WTC11 (cell line): ENCODE measurements at regions of chr14 and their contacts with region 1.

Region 1: DNA sequence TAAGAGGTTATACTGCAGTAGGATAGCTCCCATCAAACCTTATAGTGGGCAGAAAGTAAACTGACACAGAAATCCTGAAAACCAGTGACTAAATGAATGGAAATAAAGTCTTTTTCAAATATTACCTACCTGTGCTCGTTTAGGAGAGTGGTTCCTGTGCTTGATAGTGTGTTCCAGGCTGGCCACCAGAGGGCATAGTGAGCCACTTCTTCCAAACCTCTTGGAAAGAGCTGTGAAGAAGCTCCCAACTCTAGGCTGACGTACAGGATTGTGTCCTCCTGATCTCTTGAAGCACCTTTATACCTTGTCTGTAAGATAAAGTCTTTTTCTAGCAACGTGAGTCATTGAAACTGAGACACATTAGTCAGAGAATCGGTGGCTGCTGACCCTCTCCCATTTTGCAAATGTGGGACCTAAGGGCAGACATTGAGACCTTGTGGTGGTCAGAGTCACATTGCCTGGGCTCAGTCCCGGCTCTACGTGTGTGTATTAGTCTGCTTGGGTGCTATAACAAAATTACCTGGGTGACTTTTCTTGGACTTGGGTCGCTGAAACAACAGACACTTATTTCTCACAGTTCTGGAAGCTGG is 17.6 kb downstream of the TDP1 start:
- DNase-seq: peak; percentile 76
- ATAC-seq: peak; percentile 94
- H3K4me3 Mint-ChIP-seq: no peak overlapping the region
- H3K27ac Mint-ChIP-seq: no peak overlapping the region
- H3K4me1 Mint-ChIP-seq: no peaks in the 10 kb centered on the region
- H3K27me3 Mint-ChIP-seq: no peaks in the 10 kb centered on the region
- CTCF ChIP-seq: peak; percentile 74; the same call in 1 of the 2 replicates

Region 2: GRCh38 chr14:89892953-89893352 is 80.4 kb before region 1 on chr14:
- CTCF ChIA-PET with region 1: no interaction called
- POLR2A ChIA-PET with region 1: no interaction called
- DNase-seq: no peak
- ATAC-seq: no peak
- H3K4me3 Mint-ChIP-seq: no peak overlapping the region
- H3K27ac Mint-ChIP-seq: no peak overlapping the region
- H3K4me1 Mint-ChIP-seq: no peaks in the 10 kb centered on the region
- H3K27me3 Mint-ChIP-seq: no peaks in the 10 kb centered on the region
- CTCF ChIP-seq: no peak

Region 3: DNA sequence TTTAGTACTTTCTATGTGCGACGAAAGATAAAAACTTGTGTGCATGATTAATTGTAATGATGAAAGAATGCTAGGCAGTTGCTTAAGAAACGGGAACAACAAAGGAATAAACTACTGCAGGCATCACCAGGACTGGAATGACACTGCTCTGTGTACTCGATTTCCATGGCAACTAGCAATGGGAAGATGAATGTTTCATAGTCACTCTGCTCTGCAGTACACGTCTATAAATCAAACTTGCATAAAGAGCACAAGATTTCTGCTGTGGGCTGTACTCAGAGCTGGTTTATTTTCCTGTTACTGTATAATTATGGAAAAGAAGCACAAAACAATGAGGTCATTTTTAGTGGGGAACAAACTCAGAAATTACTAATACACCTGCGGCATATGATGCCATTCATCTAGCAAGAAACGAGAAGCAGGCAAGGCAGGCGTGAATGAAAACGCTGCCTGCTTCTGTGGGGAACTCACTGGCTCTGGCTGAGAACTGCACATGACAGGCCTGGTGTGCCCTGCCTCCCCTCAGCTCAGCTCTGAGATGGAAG is 60.6 kb before region 1 on chr14:
- CTCF ChIA-PET with region 1: no interaction called
- POLR2A ChIA-PET with region 1: no interaction called
- DNase-seq: no peak
- ATAC-seq: no peak
- H3K4me3 Mint-ChIP-seq: no peak overlapping the region
- H3K27ac Mint-ChIP-seq: no peak overlapping the region
- H3K4me1 Mint-ChIP-seq: peaks cover 51% of the 10 kb centered on the region
- H3K27me3 Mint-ChIP-seq: no peaks in the 10 kb centered on the region; the same call in 1 of the 2 replicates
- CTCF ChIP-seq: no peak

Region 4: DNA sequence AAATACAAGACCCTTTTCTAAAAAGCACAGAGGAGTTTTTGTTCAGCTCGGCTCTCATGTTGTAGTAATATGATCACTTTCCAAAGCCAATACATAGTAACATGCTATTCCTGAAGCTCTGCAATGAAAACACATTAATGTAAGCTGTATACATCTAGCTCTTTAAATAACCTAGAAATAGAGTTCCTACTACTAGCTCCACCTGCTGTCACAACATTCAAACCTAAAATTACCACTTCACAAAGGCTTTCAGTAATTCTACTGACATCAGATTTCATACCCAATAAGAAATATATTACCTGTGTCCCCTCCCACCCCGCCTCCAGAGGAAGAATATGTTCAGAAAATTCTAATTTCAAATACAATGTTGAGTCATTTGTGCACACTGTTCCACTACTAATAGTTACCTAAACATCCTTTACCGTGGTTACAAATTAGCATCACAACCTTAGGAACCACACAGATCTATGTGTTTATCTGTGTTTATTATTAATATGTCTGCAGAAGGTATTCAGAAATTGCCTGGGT is 36.6 kb before region 1 on chr14:
- CTCF ChIA-PET with region 1: interaction called, 20 read pairs
- POLR2A ChIA-PET with region 1: no interaction called
- DNase-seq: no peak
- ATAC-seq: no peak
- H3K4me3 Mint-ChIP-seq: no peak overlapping the region
- H3K27ac Mint-ChIP-seq: no peak overlapping the region
- H3K4me1 Mint-ChIP-seq: peaks cover 16% of the 10 kb centered on the region
- H3K27me3 Mint-ChIP-seq: no peaks in the 10 kb centered on the region
- CTCF ChIP-seq: no peak

Region 5: GRCh38 chr14:89959853-89960445 is 13.4 kb before region 1 on chr14:
- CTCF ChIA-PET with region 1: interaction called, 18 read pairs
- POLR2A ChIA-PET with region 1: interaction called, 4 read pairs
- DNase-seq: no peak
- ATAC-seq: no peak
- H3K4me3 Mint-ChIP-seq: no peak overlapping the region
- H3K27ac Mint-ChIP-seq: no peak overlapping the region
- H3K4me1 Mint-ChIP-seq: peaks cover 47% of the 10 kb centered on the region
- H3K27me3 Mint-ChIP-seq: no peaks in the 10 kb centered on the region
- CTCF ChIP-seq: no peak

Region 6: GRCh38 chr14:90060312-90060964 is 87.1 kb after region 1 on chr14:
- CTCF ChIA-PET with region 1: interaction called, 27 read pairs
- POLR2A ChIA-PET with region 1: interaction called, 3 read pairs
- DNase-seq: peak; percentile 81
- ATAC-seq: peak; percentile 82
- H3K4me3 Mint-ChIP-seq: peak overlapping the region; percentile 73
- H3K27ac Mint-ChIP-seq: no peak overlapping the region
- H3K4me1 Mint-ChIP-seq: peaks cover 28% of the 10 kb centered on the region
- H3K27me3 Mint-ChIP-seq: peaks cover 82% of the 10 kb centered on the region
- CTCF ChIP-seq: peak; percentile 47; the same call in 1 of the 2 replicates

Region 7: GRCh38 chr14:90087433-90087832 is 114.1 kb after region 1 on chr14:
- CTCF ChIA-PET with region 1: no interaction called
- POLR2A ChIA-PET with region 1: no interaction called
- DNase-seq: no peak
- ATAC-seq: no peak
- H3K4me3 Mint-ChIP-seq: no peak overlapping the region
- H3K27ac Mint-ChIP-seq: no peak overlapping the region
- H3K4me1 Mint-ChIP-seq: peaks cover 12% of the 10 kb centered on the region
- H3K27me3 Mint-ChIP-seq: peaks cover 8% of the 10 kb centered on the region
- CTCF ChIP-seq: no peak

Region 8: DNA sequence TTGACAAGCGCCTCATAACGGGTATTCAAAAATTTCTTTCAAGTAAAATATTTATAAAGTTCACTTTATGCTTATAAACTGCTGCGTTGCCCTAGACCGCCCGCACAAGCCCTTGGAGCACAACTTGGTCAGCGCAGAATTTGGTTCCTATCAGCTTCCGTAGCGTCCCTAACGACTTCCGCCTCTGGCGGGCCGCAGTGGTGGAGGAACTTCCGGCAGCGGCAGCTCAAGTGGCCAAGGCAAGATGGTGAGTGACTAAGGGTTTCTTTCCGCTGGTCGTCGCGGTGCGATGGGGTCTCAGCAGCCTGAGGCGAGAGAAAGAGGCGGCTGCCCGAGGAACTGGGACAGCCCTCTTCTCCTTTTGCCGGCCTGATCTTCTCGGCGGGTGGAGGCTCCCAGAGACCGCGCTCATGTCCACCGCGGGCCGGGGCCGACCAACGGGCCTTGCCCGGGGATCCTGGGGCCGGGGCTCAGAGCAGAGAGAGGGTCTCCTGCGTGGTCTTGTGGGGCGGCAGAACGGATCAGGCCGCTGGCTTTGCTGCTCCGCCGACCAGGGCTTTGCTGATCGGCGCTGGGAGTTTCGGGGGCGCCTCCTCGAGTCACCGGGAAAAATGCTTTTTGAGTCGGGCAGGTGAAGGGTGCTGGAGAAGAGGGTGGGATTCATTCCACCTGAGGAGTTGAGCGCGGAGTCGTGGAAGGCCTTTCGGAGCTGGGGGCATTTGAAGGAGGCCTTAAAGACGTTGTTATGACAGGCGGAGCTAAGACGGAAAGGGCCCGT is 283.2 kb after region 1 on chr14 and contains the start of gene PSMC1:
- CTCF ChIA-PET with region 1: interaction called, 10 read pairs
- POLR2A ChIA-PET with region 1: no interaction called
- DNase-seq: peak; percentile 79
- ATAC-seq: peak; percentile 94
- H3K4me3 Mint-ChIP-seq: peak within 1 kb of the TSS; percentile 98
- H3K27ac Mint-ChIP-seq: peak within 1 kb of the TSS; percentile 90
- H3K4me1 Mint-ChIP-seq: peaks cover 16% of the 10 kb centered on the region
- H3K27me3 Mint-ChIP-seq: peaks cover 34% of the 10 kb centered on the region
- CTCF ChIP-seq: no peak
- total RNA-seq, gene PSMC1: 75.9 to 92.8 TPM (median 88.9 TPM) in 3 replicates